IMR-90 (cell line): ENCODE measurements at regions of chr19 and their contacts with region 1.

Region 1: GRCh38 chr19:41144403-41144802 is 30.2 kb downstream of the CYP2F1 start:
- DNase-seq: peak; percentile 78
- ATAC-seq: peak; percentile 92
- H3K4me3 ChIP-seq: no peak overlapping the region
- H3K27ac ChIP-seq: no peak overlapping the region
- H3K4me1 ChIP-seq: no peaks in the 10 kb centered on the region
- H3K27me3 ChIP-seq: no peaks in the 10 kb centered on the region; the same call in 1 of the 2 replicates
- CTCF ChIP-seq: peak; percentile 89
- POLR2A ChIP-seq: no peak
- RAD21 ChIP-seq: peak; percentile 91

Region 2: GRCh38 chr19:40974633-40975037 is 169.8 kb before region 1 on chr19:
- CTCF ChIA-PET with region 1: no interaction called
- POLR2A ChIA-PET with region 1: no interaction called
- dilution Hi-C with region 1: no loop called
- in situ Hi-C with region 1: no loop called
- intact Hi-C with region 1: loop called (anchors 1 kb)
- DNase-seq: peak; percentile 73
- ATAC-seq: peak; percentile 82
- H3K4me3 ChIP-seq: no peak overlapping the region
- H3K27ac ChIP-seq: no peak overlapping the region
- H3K4me1 ChIP-seq: no peaks in the 10 kb centered on the region
- H3K27me3 ChIP-seq: no peaks in the 10 kb centered on the region; the same call in 1 of the 2 replicates
- CTCF ChIP-seq: peak; percentile 66
- POLR2A ChIP-seq: no peak
- RAD21 ChIP-seq: peak; percentile 66

Region 3: DNA sequence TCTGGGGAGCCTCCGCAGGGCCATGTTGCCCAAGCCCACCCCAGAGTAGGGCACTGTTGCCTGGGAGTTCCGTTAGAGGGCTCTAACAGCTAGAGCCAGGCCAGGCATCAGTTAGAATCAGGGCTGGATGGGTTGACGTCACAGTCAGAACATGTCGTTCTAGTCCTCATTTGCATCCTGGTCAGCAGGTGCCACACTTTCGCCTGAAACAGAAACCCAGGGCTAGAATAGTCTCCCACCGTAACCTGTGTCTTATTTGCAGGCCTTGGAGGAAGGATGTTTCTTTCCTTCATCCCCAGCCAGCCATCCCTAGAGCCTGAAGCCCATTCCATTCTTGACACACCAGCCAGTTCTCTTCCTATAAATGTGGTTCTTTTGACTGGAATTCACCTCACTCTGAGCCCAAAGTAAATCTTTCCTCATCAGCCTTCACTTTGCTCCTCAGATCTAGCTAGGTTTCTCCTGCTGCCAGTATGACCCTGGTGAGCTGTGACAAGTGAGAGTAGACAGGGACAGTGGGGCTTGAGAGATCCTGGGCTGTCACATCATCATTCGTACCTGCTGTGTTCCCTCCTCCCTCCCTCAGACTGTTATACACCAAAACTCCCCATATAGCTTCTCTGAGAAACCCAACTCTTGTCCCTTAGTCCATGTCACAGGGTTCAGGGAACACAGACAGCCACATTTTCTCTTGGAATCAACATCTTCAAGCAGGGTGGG is 153.4 kb after region 1 on chr19:
- CTCF ChIA-PET with region 1: no interaction called
- POLR2A ChIA-PET with region 1: no interaction called
- dilution Hi-C with region 1: no loop called
- in situ Hi-C with region 1: no loop called
- intact Hi-C with region 1: no loop called
- DNase-seq: no peak
- ATAC-seq: no peak
- H3K4me3 ChIP-seq: no peak overlapping the region
- H3K27ac ChIP-seq: no peak overlapping the region
- H3K4me1 ChIP-seq: peaks cover 24% of the 10 kb centered on the region
- H3K27me3 ChIP-seq: no peaks in the 10 kb centered on the region
- CTCF ChIP-seq: no peak
- POLR2A ChIP-seq: no peak
- RAD21 ChIP-seq: no peak

Region 4: GRCh38 chr19:41321600-41322270 is 177.3 kb after region 1 on chr19:
- CTCF ChIA-PET with region 1: no interaction called
- POLR2A ChIA-PET with region 1: no interaction called
- dilution Hi-C with region 1: no loop called
- in situ Hi-C with region 1: no loop called
- intact Hi-C with region 1: no loop called
- DNase-seq: peak; percentile 80
- ATAC-seq: peak; percentile 16
- H3K4me3 ChIP-seq: no peak overlapping the region
- H3K27ac ChIP-seq: peak overlapping the region; percentile 93
- H3K4me1 ChIP-seq: peaks cover 44% of the 10 kb centered on the region
- H3K27me3 ChIP-seq: no peaks in the 10 kb centered on the region
- CTCF ChIP-seq: peak; percentile 82
- POLR2A ChIP-seq: peak; percentile 56; the same call in 1 of the 2 replicates
- RAD21 ChIP-seq: peak; percentile 54

Region 5: DNA sequence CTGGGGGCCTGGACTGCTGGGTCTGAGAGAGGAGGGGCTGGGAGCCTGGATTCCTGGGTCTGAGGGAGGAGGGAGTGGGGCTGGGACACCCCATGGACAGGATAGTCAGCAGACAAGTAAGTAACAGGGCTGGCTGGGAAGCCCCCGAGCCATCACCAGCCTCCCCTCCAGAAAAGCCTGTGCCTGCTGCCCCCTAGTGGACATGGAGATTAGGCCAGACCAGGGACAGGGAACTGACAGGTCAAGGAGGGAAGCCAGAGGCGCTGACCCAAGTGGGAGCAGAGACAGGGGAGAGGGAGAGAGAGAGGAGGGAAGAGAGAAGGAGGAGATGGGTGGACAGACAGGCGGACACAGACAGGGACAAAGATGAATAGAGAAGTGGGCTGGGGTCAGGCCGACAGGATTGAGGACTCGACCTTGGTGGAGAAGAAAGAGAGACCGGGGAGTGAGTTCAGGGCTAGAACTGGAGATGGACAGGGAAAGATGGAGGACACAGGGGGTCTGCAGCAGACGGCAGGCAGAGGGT is 790.5 kb after region 1 on chr19:
- CTCF ChIA-PET with region 1: no interaction called
- POLR2A ChIA-PET with region 1: interaction called, 12 read pairs
- dilution Hi-C with region 1: no loop called
- in situ Hi-C with region 1: no loop called
- intact Hi-C with region 1: no loop called
- DNase-seq: peak; percentile 49
- ATAC-seq: peak; percentile 69
- H3K4me3 ChIP-seq: no peak overlapping the region
- H3K27ac ChIP-seq: no peak overlapping the region
- H3K4me1 ChIP-seq: peaks cover 12% of the 10 kb centered on the region
- H3K27me3 ChIP-seq: peaks cover 56% of the 10 kb centered on the region
- CTCF ChIP-seq: peak; percentile 84
- POLR2A ChIP-seq: no peak
- RAD21 ChIP-seq: peak; percentile 65

Region 6: DNA sequence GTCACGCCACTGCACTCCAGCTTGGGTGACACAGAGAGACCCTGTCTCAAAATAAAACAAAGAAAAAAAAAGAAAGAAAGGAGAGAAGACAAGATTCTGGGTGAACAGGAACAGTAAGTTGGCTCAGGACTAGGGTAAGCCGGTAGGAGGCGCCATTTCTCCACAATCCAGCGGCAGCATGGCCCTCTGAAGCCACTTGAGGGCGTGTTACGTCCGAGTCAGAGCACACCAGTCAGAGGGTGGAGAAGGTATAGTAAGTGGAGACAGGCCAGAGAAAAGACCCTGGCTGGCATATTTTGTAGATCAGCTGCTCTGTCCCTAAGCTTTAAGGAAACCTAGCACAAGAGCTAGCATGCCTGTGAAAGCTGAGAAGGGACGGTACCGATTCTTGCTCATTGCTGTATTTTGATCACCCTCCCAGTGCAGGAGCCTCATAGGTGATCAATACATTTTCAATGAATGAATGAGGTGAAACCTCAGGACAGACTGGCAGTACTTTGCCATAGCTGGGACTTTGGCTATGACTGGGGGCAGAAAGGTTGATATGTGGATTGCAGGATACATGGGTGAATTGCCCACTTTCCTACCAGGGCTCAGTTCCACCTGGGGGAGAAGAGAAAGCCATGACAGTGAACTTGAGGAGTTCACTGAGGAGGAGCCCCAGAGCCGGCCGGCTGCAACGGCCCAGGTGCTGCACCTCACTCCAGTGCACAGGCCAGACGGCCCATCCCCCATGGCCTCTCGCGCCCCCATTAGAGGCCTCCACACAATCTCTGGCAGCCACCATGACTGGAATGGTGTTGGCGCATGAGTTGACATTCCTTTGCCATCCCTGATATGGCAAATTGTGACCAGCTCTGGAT is 964.4 kb after region 1 on chr19:
- CTCF ChIA-PET with region 1: no interaction called
- POLR2A ChIA-PET with region 1: no interaction called
- dilution Hi-C with region 1: no loop called
- in situ Hi-C with region 1: no loop called
- intact Hi-C with region 1: no loop called
- DNase-seq: peak; percentile 89
- ATAC-seq: peak; percentile 82
- H3K4me3 ChIP-seq: no peak overlapping the region
- H3K27ac ChIP-seq: no peak overlapping the region
- H3K4me1 ChIP-seq: peaks cover 19% of the 10 kb centered on the region
- H3K27me3 ChIP-seq: peaks cover 3% of the 10 kb centered on the region; the same call in 1 of the 2 replicates
- CTCF ChIP-seq: peak; percentile 100; the same call in 1 of the 2 replicates
- POLR2A ChIP-seq: peak; percentile 69
- RAD21 ChIP-seq: peak; percentile 100